ENCODE measurements at regions of chr11 and their contacts with region 1.

Region 1: DNA sequence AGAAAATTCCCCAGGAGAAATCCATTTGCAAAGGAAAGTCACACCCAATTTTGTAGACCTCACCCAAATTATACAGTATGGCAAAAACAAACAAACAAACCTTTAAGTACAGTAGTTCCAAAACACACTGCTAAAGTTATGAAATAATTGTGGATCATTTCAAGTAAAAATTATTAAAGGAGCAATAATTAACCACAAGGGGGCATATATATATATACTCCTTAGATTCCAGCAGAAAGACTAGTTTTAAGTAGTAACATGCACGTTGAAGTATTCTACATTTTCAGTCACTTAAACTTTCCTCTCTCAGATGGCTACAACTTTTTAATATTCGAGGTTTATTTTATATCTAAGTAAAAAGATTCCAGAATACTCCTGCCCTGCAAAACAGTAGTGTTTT is 26.8 kb downstream of the RNF141 start:
- DNase-seq: peak; percentile 52
- H3K4me3 ChIP-seq: no peak overlapping the region
- H3K27ac ChIP-seq: no peak overlapping the region
- H3K4me1 ChIP-seq: peaks cover 7% of the 10 kb centered on the region
- H3K27me3 ChIP-seq: no peaks in the 10 kb centered on the region
- CTCF ChIP-seq: peak; percentile 5 to 10
- POLR2A ChIP-seq: no peak

Region 2: DNA sequence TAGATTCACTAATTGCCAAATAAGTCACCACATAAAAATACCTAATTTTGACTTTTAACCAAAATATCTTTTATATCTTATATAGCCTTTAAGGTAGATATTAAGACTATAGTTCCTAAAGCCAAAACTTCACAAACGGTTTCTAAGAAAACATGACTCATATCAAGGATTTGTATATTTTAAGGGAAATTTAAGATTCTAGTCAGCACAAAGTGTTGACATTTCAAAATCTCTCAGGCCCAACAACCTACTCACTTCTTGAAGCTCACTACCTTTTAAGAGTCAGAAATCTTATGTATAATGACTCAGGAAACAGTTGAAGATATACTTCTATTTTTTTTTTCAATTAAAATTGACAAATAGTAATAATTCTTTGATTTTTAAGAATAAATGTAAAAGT is 442.1 kb before region 1 on chr11:
- CTCF ChIA-PET with region 1: no interaction called
- POLR2A ChIA-PET with region 1: no interaction called
- dilution Hi-C with region 1: no loop called
- intact Hi-C with region 1: no loop called
- DNase-seq: no peak
- H3K4me3 ChIP-seq: no peak overlapping the region
- H3K27ac ChIP-seq: no peak overlapping the region
- H3K4me1 ChIP-seq: no peaks in the 10 kb centered on the region
- H3K27me3 ChIP-seq: no peaks in the 10 kb centered on the region
- CTCF ChIP-seq: no peak
- POLR2A ChIP-seq: no peak

Region 3: DNA sequence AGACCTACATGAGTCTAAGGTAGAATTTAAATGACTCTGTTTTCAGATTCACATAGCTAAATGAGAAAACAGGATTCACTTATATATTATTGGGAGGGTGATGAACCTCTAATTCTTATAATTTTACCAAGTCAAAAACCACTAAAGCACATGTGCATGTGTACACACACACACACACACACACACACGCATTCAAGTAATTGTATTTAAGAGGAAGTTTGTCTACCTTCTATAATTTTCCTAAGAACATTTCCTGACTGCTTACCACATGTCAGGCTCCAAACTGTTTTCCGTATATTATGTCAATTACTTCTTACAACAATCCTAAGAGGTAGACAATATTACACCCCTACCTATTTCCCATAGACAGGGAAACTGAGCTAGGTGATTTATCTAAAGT is 20.1 kb after region 1 on chr11:
- CTCF ChIA-PET with region 1: interaction called, 10 read pairs
- POLR2A ChIA-PET with region 1: no interaction called
- dilution Hi-C with region 1: no loop called
- intact Hi-C with region 1: no loop called
- DNase-seq: peak; percentile 52
- H3K4me3 ChIP-seq: no peak overlapping the region
- H3K27ac ChIP-seq: no peak overlapping the region
- H3K4me1 ChIP-seq: peaks cover 12% of the 10 kb centered on the region
- H3K27me3 ChIP-seq: no peaks in the 10 kb centered on the region
- CTCF ChIP-seq: no peak
- POLR2A ChIP-seq: no peak

Region 4: GRCh38 chr11:10906513-10906912 is 392.3 kb after region 1 on chr11:
- CTCF ChIA-PET with region 1: no interaction called
- POLR2A ChIA-PET with region 1: no interaction called
- dilution Hi-C with region 1: no loop called
- intact Hi-C with region 1: no loop called
- DNase-seq: peak; percentile 21
- H3K4me3 ChIP-seq: no peak overlapping the region
- H3K27ac ChIP-seq: no peak overlapping the region
- H3K4me1 ChIP-seq: peaks cover 10% of the 10 kb centered on the region
- H3K27me3 ChIP-seq: no peaks in the 10 kb centered on the region
- CTCF ChIP-seq: no peak
- POLR2A ChIP-seq: no peak